MCF 10A (cell line): ENCODE measurements at regions of chr14 and their contacts with region 1.

Region 1: DNA sequence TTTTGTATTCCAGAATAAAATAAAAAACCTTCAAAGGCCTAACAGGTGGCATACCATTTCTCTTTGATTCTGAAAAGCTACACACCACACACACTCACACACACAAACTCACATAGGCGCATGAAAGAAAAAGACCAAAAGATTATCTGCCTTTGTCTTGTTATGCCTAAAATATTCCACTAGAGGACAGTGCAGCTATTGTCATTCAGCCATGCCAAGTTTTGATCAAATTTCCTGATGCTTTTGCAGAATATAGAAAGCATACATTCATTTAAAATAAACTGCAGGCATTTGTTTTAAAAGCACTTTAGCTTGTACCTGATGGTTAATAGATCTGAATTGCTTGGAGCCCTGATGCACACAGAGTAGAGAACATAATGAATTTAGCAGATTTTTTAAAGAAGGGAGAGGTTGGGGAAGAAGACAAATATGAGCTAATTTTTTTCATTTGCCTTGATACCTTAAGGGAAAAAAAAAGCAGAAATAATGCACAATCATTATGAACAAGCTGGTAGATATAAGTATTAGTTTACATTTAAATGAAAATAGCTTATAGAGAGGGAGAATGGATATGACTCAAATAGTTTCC is 1766.9 kb upstream of the SEL1L start:
- DNase-seq: peak; percentile 52
- H3K4me3 Mint-ChIP-seq: no peak overlapping the region
- H3K27ac Mint-ChIP-seq: no peak overlapping the region
- H3K4me1 Mint-ChIP-seq: no peaks in the 10 kb centered on the region
- H3K27me3 Mint-ChIP-seq: no peaks in the 10 kb centered on the region
- CTCF ChIP-seq: peak; percentile 88

Region 2: GRCh38 chr14:81625343-81625742 is 1675.2 kb before region 1 on chr14:
- CTCF ChIA-PET with region 1: interaction called, 6 read pairs
- POLR2A ChIA-PET with region 1: no interaction called
- intact Hi-C with region 1: loop called (anchors 2 kb)
- DNase-seq: peak; percentile 40
- H3K4me3 Mint-ChIP-seq: no peak overlapping the region
- H3K27ac Mint-ChIP-seq: no peak overlapping the region
- H3K4me1 Mint-ChIP-seq: no peaks in the 10 kb centered on the region
- H3K27me3 Mint-ChIP-seq: peaks cover 21% of the 10 kb centered on the region
- CTCF ChIP-seq: peak; percentile 38

Region 3: DNA sequence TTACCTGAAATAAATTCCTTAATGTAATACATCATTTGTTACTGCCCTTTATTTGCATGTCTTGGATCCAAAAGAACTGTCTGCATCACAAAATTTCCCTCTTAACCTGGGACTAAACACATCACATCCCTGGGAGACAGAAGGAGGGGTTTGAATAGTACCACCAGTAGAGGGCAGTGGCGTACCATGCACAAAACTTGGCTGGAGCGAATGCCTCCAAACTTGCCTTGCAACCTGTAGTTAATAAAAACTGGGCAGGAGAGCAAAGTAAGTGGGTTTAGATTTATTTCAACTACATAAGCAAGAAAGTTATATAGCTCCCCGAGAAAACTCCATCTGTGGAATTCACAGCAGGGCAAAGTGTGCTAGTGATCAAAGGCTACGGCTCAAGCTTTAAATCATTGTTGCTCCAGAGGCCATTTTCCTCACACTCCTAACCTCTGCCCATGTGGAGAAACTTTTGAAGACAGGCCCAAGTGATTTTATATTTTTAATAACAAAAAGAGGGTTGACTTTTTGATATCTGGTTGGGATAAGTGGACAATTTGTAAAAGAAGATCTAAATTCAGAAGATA is 590.2 kb before region 1 on chr14:
- CTCF ChIA-PET with region 1: interaction called, 5 read pairs
- POLR2A ChIA-PET with region 1: no interaction called
- intact Hi-C with region 1: loop called (anchors 10 kb)
- DNase-seq: peak; percentile 73
- H3K4me3 Mint-ChIP-seq: no peak overlapping the region
- H3K27ac Mint-ChIP-seq: no peak overlapping the region
- H3K4me1 Mint-ChIP-seq: no peaks in the 10 kb centered on the region
- H3K27me3 Mint-ChIP-seq: no peaks in the 10 kb centered on the region
- CTCF ChIP-seq: peak; percentile 66

Region 4: GRCh38 chr14:83269583-83269982 is 31.0 kb before region 1 on chr14:
- CTCF ChIA-PET with region 1: no interaction called
- POLR2A ChIA-PET with region 1: no interaction called
- intact Hi-C with region 1: no loop called
- DNase-seq: no peak
- H3K4me3 Mint-ChIP-seq: no peak overlapping the region
- H3K27ac Mint-ChIP-seq: no peak overlapping the region
- H3K4me1 Mint-ChIP-seq: no peaks in the 10 kb centered on the region
- H3K27me3 Mint-ChIP-seq: no peaks in the 10 kb centered on the region
- CTCF ChIP-seq: no peak

Region 5: DNA sequence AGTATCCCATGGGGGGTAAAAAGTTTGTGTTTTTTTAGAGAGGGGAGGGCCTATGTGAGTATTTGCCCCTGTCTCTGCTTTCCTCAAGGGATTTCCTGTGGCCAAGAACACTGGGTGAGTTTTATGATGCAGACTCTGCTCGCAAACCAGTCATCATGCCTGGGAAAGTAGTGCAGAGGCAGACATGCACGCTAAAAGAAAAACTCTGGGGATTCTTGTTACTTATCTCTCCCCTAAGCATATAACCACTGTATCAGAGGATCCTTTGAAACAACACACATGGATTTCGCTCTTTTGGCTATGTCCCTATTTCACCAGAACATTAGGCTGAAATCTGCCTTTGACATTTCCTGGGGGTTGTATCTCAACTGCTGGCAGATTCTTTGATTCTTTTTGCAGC is 78.9 kb after region 1 on chr14:
- CTCF ChIA-PET with region 1: no interaction called
- POLR2A ChIA-PET with region 1: no interaction called
- intact Hi-C with region 1: no loop called
- DNase-seq: no peak
- H3K4me3 Mint-ChIP-seq: no peak overlapping the region
- H3K27ac Mint-ChIP-seq: no peak overlapping the region
- H3K4me1 Mint-ChIP-seq: no peaks in the 10 kb centered on the region
- H3K27me3 Mint-ChIP-seq: no peaks in the 10 kb centered on the region
- CTCF ChIP-seq: no peak

Region 6: GRCh38 chr14:83463500-83464098 is 163.0 kb after region 1 on chr14:
- CTCF ChIA-PET with region 1: interaction called, 21 read pairs
- POLR2A ChIA-PET with region 1: no interaction called
- intact Hi-C with region 1: loop called (anchors 1 kb)
- DNase-seq: peak; percentile 82
- H3K4me3 Mint-ChIP-seq: no peak overlapping the region
- H3K27ac Mint-ChIP-seq: peak overlapping the region; percentile 65
- H3K4me1 Mint-ChIP-seq: no peaks in the 10 kb centered on the region
- H3K27me3 Mint-ChIP-seq: no peaks in the 10 kb centered on the region
- CTCF ChIP-seq: peak; percentile 81